ENCODE measurements at regions of chr9 and their contacts with region 1.

Region 1: GRCh38 chr9:21334701-21335632 is at the start of gene KLHL9:
- DNase-seq: peak; percentile 79
- H3K4me3 Mint-ChIP-seq: peak within 1 kb of the TSS; percentile 75
- H3K27ac Mint-ChIP-seq: peak within 1 kb of the TSS; percentile 88
- H3K4me1 Mint-ChIP-seq: peaks cover 6% of the 10 kb centered on the region
- H3K27me3 Mint-ChIP-seq: no peaks in the 10 kb centered on the region
- CTCF ChIP-seq: no peak
- total RNA-seq, gene KLHL9: 9.8 and 11.6 TPM in 2 replicates

Region 2: GRCh38 chr9:21317956-21318923 is 16.7 kb before region 1 on chr9:
- CTCF ChIA-PET with region 1: interaction called, 10 read pairs
- POLR2A ChIA-PET with region 1: interaction called, 3 read pairs
- intact Hi-C with region 1: no loop called
- DNase-seq: peak; percentile 27
- H3K4me3 Mint-ChIP-seq: no peak overlapping the region
- H3K27ac Mint-ChIP-seq: no peak overlapping the region
- H3K4me1 Mint-ChIP-seq: no peaks in the 10 kb centered on the region
- H3K27me3 Mint-ChIP-seq: peaks cover 31% of the 10 kb centered on the region
- CTCF ChIP-seq: peak; percentile 35

Region 3: GRCh38 chr9:21357479-21358460 is 22.8 kb after region 1 on chr9:
- CTCF ChIA-PET with region 1: no interaction called
- POLR2A ChIA-PET with region 1: no interaction called
- intact Hi-C with region 1: no loop called
- DNase-seq: no peak
- H3K4me3 Mint-ChIP-seq: no peak overlapping the region
- H3K27ac Mint-ChIP-seq: no peak overlapping the region
- H3K4me1 Mint-ChIP-seq: no peaks in the 10 kb centered on the region
- H3K27me3 Mint-ChIP-seq: peaks cover 30% of the 10 kb centered on the region
- CTCF ChIP-seq: no peak